ENCODE measurements at regions of chr19 and their contacts with region 1.

Region 1: GRCh38 chr19:5719961-5720790 is at the starts of genes CATSPERD and LONP1:
- DNase-seq: peak; percentile 98
- H3K4me3 Mint-ChIP-seq: peak within 1 kb of the TSS; percentile 98
- H3K27ac Mint-ChIP-seq: peak within 1 kb of the TSS; percentile 96
- H3K4me1 Mint-ChIP-seq: peaks cover 25% of the 10 kb centered on the region
- H3K27me3 Mint-ChIP-seq: peaks cover 6% of the 10 kb centered on the region
- total RNA-seq, gene CATSPERD: not detected in 2 replicates
- total RNA-seq, gene LONP1: 180 and 186 TPM in 2 replicates

Region 2: DNA sequence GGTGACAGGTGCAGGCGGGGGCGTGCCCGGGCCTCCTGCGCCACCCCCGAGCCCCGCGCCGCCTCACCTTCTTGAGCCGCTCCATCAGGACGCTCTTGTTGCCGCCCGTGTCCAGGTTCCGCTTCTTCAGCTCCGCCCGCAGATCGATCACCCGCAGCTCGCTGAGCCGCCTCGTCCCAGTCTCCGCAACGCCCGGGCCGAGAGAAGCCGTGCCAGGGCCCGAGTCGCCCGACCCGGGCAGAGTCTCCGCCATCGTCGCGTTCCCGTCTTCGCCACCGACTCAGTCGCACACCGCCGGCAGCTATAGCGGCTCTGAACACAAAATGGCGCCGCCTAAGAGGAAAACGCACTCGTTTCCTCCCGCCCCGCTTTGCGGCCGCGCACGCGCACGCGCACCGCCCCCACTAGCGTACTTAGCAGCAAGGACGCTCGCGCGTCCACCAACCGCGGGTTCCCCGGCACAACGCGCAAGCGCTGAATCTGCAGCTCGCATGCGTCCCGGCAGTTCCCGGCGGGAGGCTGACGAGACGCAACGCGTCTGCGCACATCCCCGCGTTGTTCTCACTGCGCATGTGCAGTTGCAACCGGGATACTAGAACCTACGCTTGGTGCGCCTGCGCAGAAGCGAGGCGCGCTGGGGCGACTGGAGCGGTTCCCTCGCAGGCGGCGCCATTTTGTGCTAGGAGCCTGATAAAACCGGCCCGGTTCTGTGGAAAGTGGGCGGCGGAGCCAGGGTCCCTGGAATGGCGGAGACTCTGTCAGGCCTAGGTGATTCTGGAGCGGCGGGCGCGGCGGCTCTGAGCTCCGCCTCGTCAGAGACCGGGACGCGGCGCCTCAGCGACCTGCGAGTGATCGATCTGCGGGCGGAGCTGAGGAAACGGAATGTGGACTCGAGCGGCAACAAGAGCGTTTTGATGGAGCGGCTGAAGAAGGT is 97.4 kb before region 1 on chr19 and contains the starts of genes SAFB and SAFB2:
- intact Hi-C with region 1: loop called (anchors 1 kb)
- DNase-seq: peak; percentile 100
- H3K4me3 Mint-ChIP-seq: peak within 1 kb of the TSS; percentile 100
- H3K27ac Mint-ChIP-seq: peak within 1 kb of the TSS; percentile 100
- H3K4me1 Mint-ChIP-seq: peaks cover 63% of the 10 kb centered on the region
- H3K27me3 Mint-ChIP-seq: peaks cover 3% of the 10 kb centered on the region
- total RNA-seq, gene SAFB: 143 and 146 TPM in 2 replicates
- total RNA-seq, gene SAFB2: 104 and 106 TPM in 2 replicates

Region 3: DNA sequence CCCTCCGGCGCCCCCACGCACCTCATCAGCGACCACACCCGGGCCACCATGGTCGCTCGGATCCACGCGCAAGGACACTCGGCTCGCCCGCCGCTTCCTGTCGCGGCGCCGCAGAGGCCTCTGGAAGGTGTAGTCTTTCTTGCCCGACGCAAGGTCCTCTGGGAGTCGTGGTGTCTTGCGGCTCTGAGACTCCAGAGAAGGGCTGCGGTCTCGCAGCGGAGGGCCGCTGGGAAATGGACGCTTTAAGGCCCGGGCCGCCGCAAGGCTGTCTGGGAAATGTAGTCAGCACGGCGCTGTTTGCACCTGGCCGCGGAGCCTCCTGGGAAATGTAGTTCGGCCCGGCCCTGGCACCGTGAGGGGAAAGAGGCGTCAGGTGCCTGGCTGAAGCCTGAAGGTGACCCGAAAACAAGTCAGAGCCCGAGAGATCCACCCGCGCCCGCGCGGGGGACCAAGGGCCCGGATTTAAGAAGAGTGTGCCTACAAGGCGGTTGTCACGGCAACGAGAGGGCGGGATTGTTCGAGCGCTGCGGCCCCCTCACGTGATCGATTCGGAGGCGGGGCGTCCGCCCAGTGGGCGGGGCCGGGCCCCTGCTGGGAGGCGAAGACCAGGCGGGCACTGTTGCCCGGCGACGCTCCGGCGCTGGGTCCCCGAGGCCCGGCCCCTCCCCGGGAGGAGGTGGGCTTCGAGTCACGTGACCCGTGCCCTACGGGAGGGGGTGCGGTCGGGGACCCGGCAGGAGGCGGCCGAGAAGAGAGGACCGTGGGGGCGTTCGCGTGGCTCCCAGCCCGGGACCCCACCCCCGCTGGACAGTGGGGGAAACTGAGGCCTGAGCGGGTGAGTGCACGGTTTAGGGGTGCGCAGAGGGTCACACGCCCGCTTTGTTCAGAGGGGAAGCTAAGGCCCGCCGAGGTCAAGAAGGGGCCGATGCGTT is 39.5 kb before region 1 on chr19 and contains the starts of genes HSD11B1L and MICOS13:
- intact Hi-C with region 1: loop called (anchors 1 kb)
- DNase-seq: peak; percentile 97
- H3K4me3 Mint-ChIP-seq: peak within 1 kb of the TSS; percentile 99
- H3K27ac Mint-ChIP-seq: peak within 1 kb of the TSS; percentile 94
- H3K4me1 Mint-ChIP-seq: peaks cover 19% of the 10 kb centered on the region
- H3K27me3 Mint-ChIP-seq: peaks cover 3% of the 10 kb centered on the region
- total RNA-seq, gene HSD11B1L: 1.9 TPM in 2 replicates
- total RNA-seq, gene MICOS13: 57.4 and 60.6 TPM in 2 replicates

Region 4: GRCh38 chr19:5690125-5690954 is 29.8 kb before region 1 on chr19 and contains the start of gene RPL36:
- intact Hi-C with region 1: loop called (anchors 1 kb)
- DNase-seq: peak; percentile 98
- H3K4me3 Mint-ChIP-seq: peak within 1 kb of the TSS; percentile 99
- H3K27ac Mint-ChIP-seq: peak within 1 kb of the TSS; percentile 95
- H3K4me1 Mint-ChIP-seq: peaks cover 9% of the 10 kb centered on the region
- H3K27me3 Mint-ChIP-seq: no peaks in the 10 kb centered on the region
- total RNA-seq, gene RPL36: 1,000 and 1,001 TPM in 2 replicates

Region 5: GRCh38 chr19:5827891-5828660 is 107.9 kb after region 1 on chr19:
- intact Hi-C with region 1: loop called (anchors 1 kb)
- DNase-seq: peak; percentile 96
- H3K4me3 Mint-ChIP-seq: peak overlapping the region; percentile 99
- H3K27ac Mint-ChIP-seq: peak overlapping the region; percentile 99
- H3K4me1 Mint-ChIP-seq: peaks cover 13% of the 10 kb centered on the region
- H3K27me3 Mint-ChIP-seq: peaks cover 2% of the 10 kb centered on the region

Region 6: DNA sequence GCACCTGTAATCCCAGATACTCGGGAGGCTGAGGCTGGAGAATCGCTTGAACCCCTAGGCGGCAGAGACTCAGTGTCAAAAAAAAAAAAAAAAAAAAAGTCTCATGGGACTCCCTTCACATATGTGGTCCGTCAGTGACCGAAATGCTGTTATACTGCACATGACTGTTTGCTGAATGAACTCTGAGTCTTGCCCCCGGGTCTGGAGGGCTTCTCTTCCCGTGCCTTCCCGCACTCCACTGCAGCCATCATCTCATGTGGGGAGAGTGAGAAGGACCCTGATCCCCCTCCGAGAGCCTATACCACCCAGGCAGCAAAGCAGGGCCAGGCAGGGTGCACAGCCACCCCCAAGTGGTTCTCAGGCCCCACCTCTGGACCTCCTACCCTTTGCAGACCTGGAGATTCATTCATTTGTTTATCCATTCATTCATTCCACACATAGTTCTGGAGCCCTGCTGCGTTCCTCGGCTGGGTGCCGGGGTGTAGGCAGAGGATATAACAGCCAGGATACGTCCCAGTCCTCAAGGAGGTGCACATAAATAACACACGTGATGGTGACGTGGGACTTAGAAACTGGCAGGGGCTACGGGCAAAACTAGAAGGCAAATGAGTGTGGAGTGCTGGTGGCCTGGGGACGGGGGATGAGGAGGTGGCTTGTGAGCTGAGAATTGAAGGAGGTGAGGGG is 169.3 kb after region 1 on chr19:
- intact Hi-C with region 1: no loop called
- DNase-seq: no peak
- H3K4me3 Mint-ChIP-seq: no peak overlapping the region
- H3K27ac Mint-ChIP-seq: no peak overlapping the region
- H3K4me1 Mint-ChIP-seq: no peaks in the 10 kb centered on the region
- H3K27me3 Mint-ChIP-seq: peaks cover 2% of the 10 kb centered on the region